ENCODE measurements at regions of chr15 and their contacts with region 1.

Region 1: DNA sequence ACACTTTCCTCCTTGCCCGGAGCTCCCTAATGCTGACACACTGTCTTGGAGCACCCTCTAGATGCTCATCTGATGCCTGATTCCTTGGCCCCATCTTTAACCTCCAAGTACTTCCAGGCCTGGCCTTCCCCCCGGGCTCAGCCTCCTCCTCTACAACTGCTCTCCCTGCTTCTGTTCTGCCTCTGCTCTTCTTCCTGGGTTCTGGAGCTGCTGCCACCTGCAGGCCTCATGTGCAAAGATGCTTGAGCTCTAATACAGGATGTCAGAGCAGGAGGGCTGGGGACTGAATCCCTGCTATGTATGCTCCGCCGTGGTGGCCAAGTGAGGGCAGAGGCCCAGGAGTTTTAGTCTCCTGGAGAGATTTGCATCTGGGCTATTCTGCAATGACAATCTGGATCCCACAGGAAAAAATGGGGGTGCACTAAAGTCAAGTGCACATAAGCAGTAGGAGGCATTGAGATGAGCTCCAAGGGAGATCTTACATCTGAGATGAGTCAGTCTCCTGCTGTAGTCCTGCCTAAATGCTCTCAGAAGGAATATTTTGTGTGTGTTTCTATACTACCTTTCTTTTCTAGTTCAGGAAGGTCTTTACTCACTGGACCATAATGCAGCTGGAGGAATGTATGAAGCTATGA is 296.3 kb downstream of the UACA start:
- DNase-seq: no peak
- ATAC-seq: peak; percentile 88
- H3K4me3 ChIP-seq: no peak overlapping the region
- H3K27ac ChIP-seq: peak overlapping the region; percentile 99
- H3K4me1 ChIP-seq: peaks cover 45% of the 10 kb centered on the region
- H3K27me3 ChIP-seq: no peaks in the 10 kb centered on the region
- CTCF ChIP-seq: peak; percentile 88

Region 2: GRCh38 chr15:70488002-70488605 is 21.1 kb after region 1 on chr15:
- CTCF ChIA-PET with region 1: interaction called, 12 read pairs
- POLR2A ChIA-PET with region 1: no interaction called
- in situ Hi-C with region 1: no loop called
- intact Hi-C with region 1: no loop called
- DNase-seq: no peak
- ATAC-seq: peak; percentile 28
- H3K4me3 ChIP-seq: no peak overlapping the region
- H3K27ac ChIP-seq: peak overlapping the region; percentile 92
- H3K4me1 ChIP-seq: peaks cover 40% of the 10 kb centered on the region
- H3K27me3 ChIP-seq: no peaks in the 10 kb centered on the region
- CTCF ChIP-seq: peak; percentile 95

Region 3: DNA sequence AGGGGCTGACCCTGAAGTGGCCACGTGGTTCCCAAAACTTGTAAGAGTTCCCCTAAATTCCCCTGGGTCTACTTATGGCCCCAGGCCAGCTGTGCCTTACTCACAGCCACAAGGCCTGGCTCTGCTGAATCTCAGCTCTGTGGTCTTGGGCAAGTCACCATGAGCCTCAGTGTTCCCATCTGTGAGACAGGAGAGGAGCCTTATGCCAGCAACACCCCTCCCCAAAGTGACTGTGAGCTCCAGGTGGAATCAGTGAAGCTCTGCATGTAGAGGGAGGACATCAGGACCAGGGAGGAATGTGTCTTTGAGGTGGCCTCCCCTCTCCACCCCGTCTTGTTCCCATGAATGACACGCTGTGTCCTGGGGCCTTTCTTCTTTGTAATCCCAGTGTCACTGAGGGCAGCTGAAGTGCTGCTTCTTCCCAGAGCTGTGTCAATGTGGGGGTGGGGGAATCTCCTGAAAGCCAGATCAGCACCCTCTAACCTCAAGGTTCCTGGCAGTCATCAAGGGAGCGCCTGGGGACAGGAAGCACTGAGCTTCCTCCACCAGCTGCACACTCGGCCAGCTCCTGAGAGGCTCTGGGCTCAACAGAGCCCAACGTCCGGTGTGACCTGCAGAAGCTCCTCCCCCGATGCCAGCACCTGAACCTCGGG is 37.4 kb after region 1 on chr15:
- CTCF ChIA-PET with region 1: interaction called, 12 read pairs
- POLR2A ChIA-PET with region 1: no interaction called
- in situ Hi-C with region 1: no loop called
- intact Hi-C with region 1: no loop called
- DNase-seq: no peak
- ATAC-seq: peak; percentile 54
- H3K4me3 ChIP-seq: no peak overlapping the region
- H3K27ac ChIP-seq: peak overlapping the region; percentile 92
- H3K4me1 ChIP-seq: peaks cover 87% of the 10 kb centered on the region
- H3K27me3 ChIP-seq: no peaks in the 10 kb centered on the region
- CTCF ChIP-seq: no peak

Measured in Panc1 (cell line).